Breast epithelium (tissue), 4 donors: ENCODE measurements at regions of chr5 and their contacts with region 1.

Region 1: DNA sequence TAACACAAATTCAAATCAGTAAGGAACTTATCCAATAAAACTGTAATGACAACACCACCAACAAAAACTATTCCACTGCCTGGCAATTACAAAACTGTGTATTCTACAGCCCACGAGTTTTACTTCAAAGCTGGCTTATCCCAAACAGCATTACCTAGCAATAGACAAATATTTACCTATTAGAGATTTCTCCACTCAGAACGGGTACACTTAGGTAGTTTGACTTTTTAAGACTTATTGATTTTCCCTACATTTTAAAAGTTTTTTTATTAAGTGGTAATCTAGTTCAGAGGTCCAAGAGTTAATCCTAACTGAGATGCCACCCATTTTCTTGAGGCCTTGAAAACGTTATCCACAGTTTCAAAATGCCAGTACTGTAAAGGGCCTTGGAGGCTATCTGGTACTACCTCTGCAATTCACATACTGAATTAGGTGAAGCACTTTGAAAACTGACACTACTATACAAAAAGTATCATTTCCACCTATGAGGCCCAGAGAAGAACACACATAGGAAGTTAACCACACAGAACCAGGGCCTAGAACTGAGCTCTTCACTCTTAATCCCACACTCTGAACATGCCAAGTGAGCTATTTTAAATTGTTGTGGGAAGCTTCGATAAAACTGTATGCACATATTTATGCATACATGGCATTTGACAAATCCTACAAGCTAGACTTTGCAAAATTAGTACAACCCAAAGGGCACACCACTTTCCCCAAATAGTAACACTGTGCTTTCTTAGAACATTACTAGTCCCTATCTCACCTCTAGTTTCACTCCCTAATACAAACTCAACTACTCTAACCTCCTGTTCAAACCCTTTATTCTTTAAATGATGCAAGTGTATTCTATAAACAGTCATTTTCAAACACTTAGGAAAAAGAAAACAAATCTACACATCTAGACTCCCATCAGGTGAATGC is 2.1 kb downstream of the NADK2 start:
- DNase-seq: no peak
- H3K4me3 ChIP-seq: peak overlapping the region in 2 of 3 donors; percentile 85 to 95
- H3K27ac ChIP-seq: peak overlapping the region; percentile 97 to 99
- H3K4me1 ChIP-seq: no peaks in the 10 kb centered on the region
- H3K27me3 ChIP-seq: no peaks in the 10 kb centered on the region
- CTCF ChIP-seq: no peak
- POLR2A ChIP-seq: no peak

Region 2: GRCh38 chr5:36206913-36207312 is 32.7 kb before region 1 on chr5:
- intact Hi-C with region 1: loop called (anchors 2 kb)
- DNase-seq: no peak
- H3K4me3 ChIP-seq: no peak overlapping the region
- H3K27ac ChIP-seq: no peak overlapping the region
- H3K4me1 ChIP-seq: no peaks in the 10 kb centered on the region
- H3K27me3 ChIP-seq: no peaks in the 10 kb centered on the region
- CTCF ChIP-seq: no peak
- POLR2A ChIP-seq: no peak